ENCODE measurements at regions of chr13 and their contacts with region 1.

Region 1: GRCh38 chr13:77919921-77920294 is 1.3 kb upstream of the EDNRB start:
- DNase-seq: no peak
- H3K4me3 ChIP-seq: peak overlapping the region in 1 of 3 experiments; percentile 45
- H3K27ac ChIP-seq: no peak overlapping the region
- H3K4me1 ChIP-seq: peaks cover 16% of the 10 kb centered on the region
- H3K27me3 ChIP-seq: peaks cover 7% of the 10 kb centered on the region
- CTCF ChIP-seq: no peak

Region 2: DNA sequence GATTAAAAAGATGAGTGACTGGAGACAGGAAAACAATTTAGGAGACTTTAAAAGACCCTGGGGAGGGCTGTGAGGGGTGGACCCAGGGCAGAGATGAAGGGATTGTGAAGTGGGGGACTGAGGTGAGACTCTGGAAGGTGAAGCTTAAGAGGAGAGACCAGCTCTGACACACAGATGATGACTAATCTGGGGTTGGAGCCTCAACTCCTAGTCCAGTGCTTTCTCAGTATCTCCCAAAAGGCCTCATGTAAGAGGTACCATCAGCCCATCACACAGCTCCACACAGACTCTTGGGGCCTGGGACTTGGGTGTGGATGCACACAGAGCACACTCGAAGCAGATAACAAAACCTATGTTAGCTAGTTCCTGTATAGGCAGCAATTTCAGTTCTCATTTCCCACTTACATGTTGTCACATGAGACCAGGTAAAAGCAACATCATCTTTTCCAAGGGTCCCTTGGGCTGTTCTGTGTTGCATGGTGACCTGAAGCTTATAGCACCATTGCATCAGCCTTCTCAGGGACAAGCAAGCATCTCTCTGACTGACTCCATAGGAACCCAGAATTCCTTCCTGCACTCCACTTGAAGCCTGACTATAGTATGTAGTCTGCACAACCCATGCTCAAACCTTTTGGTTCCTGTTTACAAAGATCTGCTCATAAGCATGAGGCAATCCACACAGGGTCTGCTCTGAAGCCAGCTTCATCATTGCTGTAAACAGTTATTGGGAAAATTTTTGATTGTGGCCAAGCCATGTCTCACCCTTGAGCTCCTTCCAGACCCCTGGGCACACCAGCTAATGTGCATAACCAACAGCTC is 504.4 kb before region 1 on chr13:
- CTCF ChIA-PET with region 1: no interaction called
- dilution Hi-C with region 1: no loop called
- in situ Hi-C with region 1: no loop called
- intact Hi-C with region 1: no loop called
- DNase-seq: no peak
- H3K4me3 ChIP-seq: no peak overlapping the region
- H3K27ac ChIP-seq: no peak overlapping the region
- H3K4me1 ChIP-seq: no peaks in the 10 kb centered on the region
- H3K27me3 ChIP-seq: no peaks in the 10 kb centered on the region
- CTCF ChIP-seq: no peak

Region 3: GRCh38 chr13:77991003-77991402 is 71.1 kb after region 1 on chr13:
- CTCF ChIA-PET with region 1: no interaction called
- dilution Hi-C with region 1: loop called (anchors 5 kb)
- in situ Hi-C with region 1: no loop called
- intact Hi-C with region 1: no loop called
- DNase-seq: no peak
- H3K4me3 ChIP-seq: no peak overlapping the region
- H3K27ac ChIP-seq: no peak overlapping the region
- H3K4me1 ChIP-seq: no peaks in the 10 kb centered on the region
- H3K27me3 ChIP-seq: no peaks in the 10 kb centered on the region
- CTCF ChIP-seq: no peak

Region 4: GRCh38 chr13:79353693-79354092 is 1433.8 kb after region 1 on chr13:
- CTCF ChIA-PET with region 1: no interaction called
- dilution Hi-C with region 1: no loop called
- in situ Hi-C with region 1: no loop called
- intact Hi-C with region 1: no loop called
- DNase-seq: no peak
- H3K4me3 ChIP-seq: no peak overlapping the region
- H3K27ac ChIP-seq: no peak overlapping the region
- H3K4me1 ChIP-seq: no peaks in the 10 kb centered on the region
- H3K27me3 ChIP-seq: no peaks in the 10 kb centered on the region
- CTCF ChIP-seq: no peak

Measured in mammary epithelial cell (primary cell).